Activated CD4-positive, alpha-beta T cell treated with anti-CD3 and anti-CD28 coated beads, Interleukin-2, amount 10 ng/mL, durations not matched to agents 24 days and 14 days (primary cell): ENCODE measurements at regions of chr2 and their contacts with region 1.

Region 1: GRCh38 chr2:236569573-236569973 is at the start of gene ACKR3:
- DNase-seq: peak; percentile 92
- H3K4me3 Mint-ChIP-seq: peak within 1 kb of the TSS; percentile 81
- H3K27ac Mint-ChIP-seq: no peak within 1 kb of the TSS
- H3K4me1 Mint-ChIP-seq: peaks cover 17% of the 10 kb centered on the region
- H3K27me3 Mint-ChIP-seq: peaks cover 11% of the 10 kb centered on the region
- total RNA-seq, gene ACKR3: 0.58 and 0.64 TPM in 2 replicates

Region 2: GRCh38 chr2:236352761-236353593 is 216.6 kb before region 1 on chr2:
- intact Hi-C with region 1: loop called (anchors 1 kb)
- DNase-seq: peak; percentile 77
- H3K4me3 Mint-ChIP-seq: no peak overlapping the region
- H3K27ac Mint-ChIP-seq: no peak overlapping the region
- H3K4me1 Mint-ChIP-seq: peaks cover 2% of the 10 kb centered on the region
- H3K27me3 Mint-ChIP-seq: no peaks in the 10 kb centered on the region

Region 3: DNA sequence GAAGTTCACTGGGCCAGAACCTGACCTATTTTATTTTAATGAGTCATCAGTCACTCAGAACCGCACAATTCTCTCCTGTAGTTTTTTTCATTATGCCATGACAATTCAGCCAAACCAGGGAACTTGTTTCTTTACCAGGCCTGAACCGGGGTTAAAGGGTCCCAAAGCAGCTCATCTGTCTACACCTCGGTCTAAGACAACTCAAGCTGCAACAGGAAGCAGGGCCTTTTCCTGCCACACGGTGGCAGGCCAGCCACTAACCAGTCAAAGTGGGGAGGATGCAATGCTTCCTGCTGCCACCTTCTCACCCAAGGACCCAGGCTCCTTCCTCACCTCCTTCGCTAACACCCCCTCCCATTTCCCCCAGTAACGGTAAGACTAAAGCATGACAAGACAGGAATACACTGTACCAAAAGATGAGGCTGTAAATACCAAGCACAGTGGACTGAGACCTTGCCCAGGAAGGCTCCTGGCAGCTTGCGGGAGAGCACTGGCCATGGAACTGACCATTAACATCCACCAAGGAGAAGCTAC is 56.6 kb before region 1 on chr2:
- intact Hi-C with region 1: loop called (anchors 1 kb)
- DNase-seq: peak; percentile 90
- H3K4me3 Mint-ChIP-seq: no peak overlapping the region
- H3K27ac Mint-ChIP-seq: no peak overlapping the region
- H3K4me1 Mint-ChIP-seq: peaks cover 2% of the 10 kb centered on the region
- H3K27me3 Mint-ChIP-seq: peaks cover 36% of the 10 kb centered on the region

Region 4: DNA sequence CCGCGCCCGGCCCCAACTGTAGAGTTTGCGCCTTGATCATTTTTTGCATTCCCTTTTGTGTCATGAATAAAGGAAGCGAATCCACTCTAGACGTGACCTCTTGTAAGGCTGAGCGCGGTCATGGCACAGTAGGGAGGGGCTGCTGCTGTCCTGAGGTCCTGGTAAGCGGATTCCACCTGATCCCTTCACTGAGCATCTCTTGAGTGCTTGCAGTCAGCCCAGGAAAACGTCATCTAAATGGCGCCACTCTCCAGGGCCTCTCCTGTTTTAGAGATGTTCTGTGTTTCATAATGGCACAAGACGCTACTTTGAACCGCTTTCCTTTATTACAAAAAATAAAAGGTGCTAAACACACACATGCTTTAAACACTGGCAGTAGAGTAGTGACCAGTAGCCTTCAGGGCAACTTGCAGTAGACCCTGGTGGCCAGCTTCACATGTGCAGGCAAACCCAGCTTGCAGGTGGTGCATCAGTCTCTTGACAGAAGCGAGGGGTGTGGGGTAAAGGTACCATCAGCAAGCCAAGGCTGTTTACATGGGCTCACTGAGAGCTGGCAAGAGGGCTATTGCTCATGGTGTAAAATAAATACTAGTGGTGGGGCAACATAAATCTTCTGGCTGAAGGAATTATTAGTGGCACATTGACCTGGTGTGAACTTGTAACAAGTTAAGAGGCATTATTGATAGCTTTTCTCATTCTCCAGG is 43.0 kb before region 1 on chr2:
- intact Hi-C with region 1: no loop called
- DNase-seq: no peak
- H3K4me3 Mint-ChIP-seq: no peak overlapping the region
- H3K27ac Mint-ChIP-seq: no peak overlapping the region
- H3K4me1 Mint-ChIP-seq: no peaks in the 10 kb centered on the region
- H3K27me3 Mint-ChIP-seq: peaks cover 25% of the 10 kb centered on the region

Region 5: GRCh38 chr2:236536727-236537398 is 32.7 kb before region 1 on chr2:
- intact Hi-C with region 1: loop called (anchors 2 kb)
- DNase-seq: peak; percentile 87
- H3K4me3 Mint-ChIP-seq: peak overlapping the region; percentile 92
- H3K27ac Mint-ChIP-seq: peak overlapping the region; percentile 89
- H3K4me1 Mint-ChIP-seq: peaks cover 49% of the 10 kb centered on the region
- H3K27me3 Mint-ChIP-seq: no peaks in the 10 kb centered on the region

Region 6: DNA sequence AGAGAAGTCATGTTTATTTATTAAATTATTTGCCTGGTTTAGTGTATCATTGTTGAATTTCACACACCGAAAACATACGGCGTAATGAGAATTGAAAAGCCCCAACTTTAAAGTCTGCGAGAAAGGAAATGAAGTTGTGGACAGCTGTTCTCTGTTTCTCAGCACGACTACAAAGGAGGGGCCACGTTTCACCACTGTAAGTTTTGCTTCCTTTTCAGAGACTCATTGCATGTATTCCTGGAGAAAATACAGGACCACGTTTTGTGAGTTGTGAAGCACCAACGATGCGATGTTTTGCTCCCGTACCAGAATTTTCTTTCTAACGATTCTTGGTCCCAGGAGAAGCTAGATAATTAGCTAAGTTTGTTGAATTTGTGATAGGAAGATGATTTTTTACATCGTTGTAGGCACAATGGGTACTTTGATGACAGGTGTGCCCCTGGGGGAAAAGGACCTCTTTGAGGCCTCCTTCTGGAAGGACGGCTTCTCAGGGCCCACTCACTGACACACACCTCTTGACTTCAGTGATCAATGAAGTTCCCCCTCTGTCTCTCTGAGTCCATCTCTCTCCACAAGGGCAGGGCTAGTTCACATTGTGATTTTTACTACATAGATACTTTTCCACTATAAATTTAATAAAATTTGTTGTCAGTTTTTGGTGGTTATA is 23.6 kb before region 1 on chr2:
- intact Hi-C with region 1: loop called (anchors 2 kb)
- DNase-seq: peak; percentile 81
- H3K4me3 Mint-ChIP-seq: peak overlapping the region; percentile 80
- H3K27ac Mint-ChIP-seq: peak overlapping the region; percentile 89
- H3K4me1 Mint-ChIP-seq: peaks cover 74% of the 10 kb centered on the region
- H3K27me3 Mint-ChIP-seq: no peaks in the 10 kb centered on the region

Region 7: GRCh38 chr2:237529452-237530402 is 960.2 kb after region 1 on chr2:
- intact Hi-C with region 1: no loop called
- DNase-seq: no peak
- H3K4me3 Mint-ChIP-seq: no peak overlapping the region
- H3K27ac Mint-ChIP-seq: no peak overlapping the region
- H3K4me1 Mint-ChIP-seq: no peaks in the 10 kb centered on the region
- H3K27me3 Mint-ChIP-seq: peaks cover 2% of the 10 kb centered on the region